Natural killer cell (primary cell): ENCODE measurements at regions of chr14 and their contacts with region 1.

Region 1: DNA sequence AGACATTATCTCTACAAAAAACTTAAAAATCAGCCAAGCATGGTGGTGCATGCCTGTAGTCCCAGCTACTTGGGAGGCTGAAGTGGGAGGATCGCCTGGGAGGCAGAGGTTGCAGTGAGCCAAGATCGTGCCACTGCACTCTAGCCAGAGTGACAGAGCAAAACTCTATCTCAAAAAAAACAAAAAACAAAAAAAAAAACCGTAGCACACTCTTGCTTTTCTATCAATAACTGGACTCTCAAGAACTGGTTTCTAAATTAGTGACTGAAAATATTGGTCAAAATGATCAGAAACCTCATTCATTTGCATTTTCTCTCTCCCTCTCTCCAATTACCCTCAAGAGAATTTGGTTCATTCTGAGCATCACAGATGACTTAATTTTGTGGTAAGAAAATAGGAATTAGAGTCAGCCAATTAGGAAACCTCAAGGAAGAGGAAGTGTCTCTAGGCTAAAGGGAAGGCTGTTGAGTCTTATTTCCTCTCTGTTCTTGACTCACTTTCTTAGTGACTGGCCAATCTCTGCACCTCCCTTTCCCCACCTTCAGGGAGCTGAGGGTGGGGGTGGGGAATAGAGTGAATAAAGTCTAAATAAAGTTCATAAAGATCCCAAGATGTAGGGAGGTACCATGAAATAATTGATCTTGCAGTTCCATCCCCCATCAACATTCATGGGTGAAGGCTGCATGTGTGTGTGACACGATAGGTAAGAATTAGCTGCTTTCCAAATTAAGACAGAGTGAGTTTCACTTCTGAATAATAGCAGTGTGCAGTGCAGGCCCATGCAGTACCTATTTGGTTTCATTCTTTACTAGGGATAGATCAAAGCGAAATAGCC is 6.8 kb upstream of the PSMA6 start:
- DNase-seq: peak in 1 of 2 donors; percentile 45
- ATAC-seq: peak; percentile 66 to 75 (median 67)
- H3K4me3 ChIP-seq: no peak overlapping the region
- H3K4me3 Mint-ChIP-seq: peak overlapping the region; percentile 62
- H3K27ac ChIP-seq: peak overlapping the region; percentile 78
- H3K27ac Mint-ChIP-seq: peak overlapping the region; percentile 95 to 96
- H3K4me1 ChIP-seq: peaks cover 35% of the 10 kb centered on the region
- H3K4me1 Mint-ChIP-seq: peaks cover 42 to 44% of the 10 kb centered on the region in 2 donors
- H3K27me3 ChIP-seq: no peaks in the 10 kb centered on the region
- H3K27me3 Mint-ChIP-seq: no peaks in the 10 kb centered on the region
- CTCF ChIP-seq: no peak

Region 2: GRCh38 chr14:35222872-35223466 is 62.4 kb before region 1 on chr14:
- intact Hi-C with region 1: loop called (anchors 5 kb)
- DNase-seq: peak in 1 of 2 donors; percentile 12
- ATAC-seq: peak; percentile 42 to 70 (median 68)
- H3K4me3 ChIP-seq: no peak overlapping the region
- H3K4me3 Mint-ChIP-seq: no peak overlapping the region
- H3K27ac ChIP-seq: no peak overlapping the region
- H3K27ac Mint-ChIP-seq: peak overlapping the region; percentile 74 to 81
- H3K4me1 ChIP-seq: no peaks in the 10 kb centered on the region
- H3K4me1 Mint-ChIP-seq: peaks cover 23 to 27% of the 10 kb centered on the region in 2 donors
- H3K27me3 ChIP-seq: no peaks in the 10 kb centered on the region
- H3K27me3 Mint-ChIP-seq: no peaks in the 10 kb centered on the region
- CTCF ChIP-seq: no peak

Region 3: GRCh38 chr14:35374273-35374681 is 88.9 kb after region 1 on chr14:
- intact Hi-C with region 1: no loop called
- DNase-seq: no peak
- ATAC-seq: no peak
- H3K4me3 ChIP-seq: no peak overlapping the region
- H3K4me3 Mint-ChIP-seq: no peak overlapping the region
- H3K27ac ChIP-seq: no peak overlapping the region
- H3K27ac Mint-ChIP-seq: no peak overlapping the region
- H3K4me1 ChIP-seq: no peaks in the 10 kb centered on the region
- H3K4me1 Mint-ChIP-seq: no peaks in the 10 kb centered on the region
- H3K27me3 ChIP-seq: no peaks in the 10 kb centered on the region
- H3K27me3 Mint-ChIP-seq: no peaks in the 10 kb centered on the region
- CTCF ChIP-seq: no peak